Activated CD4-positive, alpha-beta T cell treated with anti-CD3 and anti-CD28 coated beads, Interleukin-2, amount 10 ng/mL, durations not matched to agents 7 days and 5 days (primary cell): ENCODE measurements at regions of chr6 and their contacts with region 1.

Region 1: GRCh38 chr6:26103770-26104456 is 16.7 kb downstream of the HFE start:
- DNase-seq: peak; percentile 92
- H3K4me3 Mint-ChIP-seq: peak overlapping the region; percentile 84
- H3K27ac Mint-ChIP-seq: peak overlapping the region; percentile 99
- H3K4me1 Mint-ChIP-seq: peaks cover 25% of the 10 kb centered on the region
- H3K27me3 Mint-ChIP-seq: peaks cover 2% of the 10 kb centered on the region

Region 2: DNA sequence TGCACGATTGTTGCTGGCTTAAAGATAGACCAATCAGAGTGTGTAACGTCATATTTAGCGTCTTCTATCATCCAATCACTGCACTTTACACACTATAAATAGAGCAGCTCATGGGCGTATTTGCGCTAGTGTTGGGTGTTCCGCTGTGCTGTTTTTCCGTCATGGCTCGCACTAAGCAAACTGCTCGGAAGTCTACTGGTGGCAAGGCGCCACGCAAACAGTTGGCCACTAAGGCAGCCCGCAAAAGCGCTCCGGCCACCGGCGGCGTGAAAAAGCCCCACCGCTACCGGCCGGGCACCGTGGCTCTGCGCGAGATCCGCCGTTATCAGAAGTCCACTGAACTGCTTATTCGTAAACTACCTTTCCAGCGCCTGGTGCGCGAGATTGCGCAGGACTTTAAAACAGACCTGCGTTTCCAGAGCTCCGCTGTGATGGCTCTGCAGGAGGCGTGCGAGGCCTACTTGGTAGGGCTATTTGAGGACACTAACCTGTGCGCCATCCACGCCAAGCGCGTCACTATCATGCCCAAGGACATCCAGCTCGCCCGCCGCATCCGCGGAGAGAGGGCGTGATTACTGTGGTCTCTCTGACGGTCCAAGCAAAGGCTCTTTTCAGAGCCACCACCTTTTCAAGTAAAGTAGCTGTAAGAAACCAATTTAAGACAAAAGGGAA is 83.4 kb before region 1 on chr6:
- CTCF ChIA-PET with region 1: no interaction called
- POLR2A ChIA-PET with region 1: no interaction called
- DNase-seq: peak; percentile 86
- H3K4me3 Mint-ChIP-seq: peak overlapping the region; percentile 91
- H3K27ac Mint-ChIP-seq: peak overlapping the region; percentile 100
- H3K4me1 Mint-ChIP-seq: peaks cover 62% of the 10 kb centered on the region
- H3K27me3 Mint-ChIP-seq: no peaks in the 10 kb centered on the region

Region 3: GRCh38 chr6:26065952-26066380 is 37.9 kb before region 1 on chr6:
- CTCF ChIA-PET with region 1: interaction called, 326 read pairs
- POLR2A ChIA-PET with region 1: interaction called, 8 read pairs
- DNase-seq: peak; percentile 76
- H3K4me3 Mint-ChIP-seq: no peak overlapping the region
- H3K27ac Mint-ChIP-seq: no peak overlapping the region
- H3K4me1 Mint-ChIP-seq: peaks cover 13% of the 10 kb centered on the region
- H3K27me3 Mint-ChIP-seq: peaks cover 24% of the 10 kb centered on the region

Region 4: GRCh38 chr6:26295691-26296555 is 192.0 kb after region 1 on chr6:
- CTCF ChIA-PET with region 1: no interaction called
- POLR2A ChIA-PET with region 1: no interaction called
- DNase-seq: peak; percentile 18
- H3K4me3 Mint-ChIP-seq: peak overlapping the region; percentile 23
- H3K27ac Mint-ChIP-seq: peak overlapping the region; percentile 81
- H3K4me1 Mint-ChIP-seq: peaks cover 19% of the 10 kb centered on the region
- H3K27me3 Mint-ChIP-seq: no peaks in the 10 kb centered on the region

Region 5: GRCh38 chr6:27237089-27237803 is 1133.3 kb after region 1 on chr6:
- CTCF ChIA-PET with region 1: no interaction called
- POLR2A ChIA-PET with region 1: no interaction called
- DNase-seq: peak; percentile 28
- H3K4me3 Mint-ChIP-seq: peak overlapping the region; percentile 58
- H3K27ac Mint-ChIP-seq: peak overlapping the region; percentile 63
- H3K4me1 Mint-ChIP-seq: peaks cover 31% of the 10 kb centered on the region
- H3K27me3 Mint-ChIP-seq: peaks cover 59% of the 10 kb centered on the region